ENCODE measurements at regions of chr22 and their contacts with region 1.

Region 1: GRCh38 chr22:45096256-45096907 is 67.3 kb upstream of the NUP50 start:
- DNase-seq: peak; percentile 87
- H3K4me3 ChIP-seq: no peak overlapping the region
- H3K27ac ChIP-seq: no peak overlapping the region
- H3K4me1 ChIP-seq: no peaks in the 10 kb centered on the region; a peak in 1 of 4 replicates
- H3K27me3 ChIP-seq: no peaks in the 10 kb centered on the region
- CTCF ChIP-seq: peak; percentile 83
- EP300 ChIP-seq: no peak
- RAD21 ChIP-seq: peak; percentile 85

Region 2: DNA sequence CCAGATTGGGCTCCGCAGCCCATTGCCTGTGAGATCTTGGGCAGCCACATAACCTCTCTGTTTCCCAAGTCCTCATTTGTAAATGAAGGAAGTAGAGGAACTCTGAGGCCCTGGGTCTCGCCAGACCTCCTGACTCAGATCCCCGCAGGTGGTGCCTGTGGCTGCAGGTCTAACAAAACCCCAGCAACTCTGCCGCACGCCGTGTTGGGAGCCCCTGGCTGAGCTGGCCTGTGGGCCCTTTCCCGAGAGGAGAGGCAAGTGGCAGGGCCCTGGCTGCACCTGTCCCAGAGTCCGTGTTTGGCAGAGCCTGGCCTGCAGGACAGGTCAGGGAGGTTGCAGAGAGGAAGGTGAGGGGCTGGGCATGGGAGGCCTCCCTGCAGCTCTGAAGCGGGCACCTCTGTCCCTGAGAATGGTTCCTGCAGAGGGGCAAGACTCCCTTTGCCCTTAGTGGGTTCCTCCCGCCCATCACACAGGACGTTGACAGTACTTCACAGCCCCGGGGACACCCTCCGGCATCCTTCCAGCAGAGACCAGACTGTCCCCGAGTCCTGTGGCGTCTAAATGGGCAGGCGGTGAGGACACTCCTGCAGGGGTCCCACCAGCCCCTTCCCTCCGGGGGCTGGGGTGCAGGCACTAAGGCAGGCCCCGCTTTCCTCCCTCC is 276.3 kb before region 1 on chr22:
- CTCF ChIA-PET with region 1: interaction called, 33 read pairs
- POLR2A ChIA-PET with region 1: no interaction called
- DNase-seq: no peak
- H3K4me3 ChIP-seq: peak overlapping the region in 1 of 2 experiments; percentile 47; a peak in 1 of 4 replicates
- H3K27ac ChIP-seq: no peak overlapping the region
- H3K4me1 ChIP-seq: no peaks in the 10 kb centered on the region; a peak in 1 of 4 replicates
- H3K27me3 ChIP-seq: no peaks in the 10 kb centered on the region
- CTCF ChIP-seq: no peak
- EP300 ChIP-seq: no peak
- RAD21 ChIP-seq: no peak

Region 3: DNA sequence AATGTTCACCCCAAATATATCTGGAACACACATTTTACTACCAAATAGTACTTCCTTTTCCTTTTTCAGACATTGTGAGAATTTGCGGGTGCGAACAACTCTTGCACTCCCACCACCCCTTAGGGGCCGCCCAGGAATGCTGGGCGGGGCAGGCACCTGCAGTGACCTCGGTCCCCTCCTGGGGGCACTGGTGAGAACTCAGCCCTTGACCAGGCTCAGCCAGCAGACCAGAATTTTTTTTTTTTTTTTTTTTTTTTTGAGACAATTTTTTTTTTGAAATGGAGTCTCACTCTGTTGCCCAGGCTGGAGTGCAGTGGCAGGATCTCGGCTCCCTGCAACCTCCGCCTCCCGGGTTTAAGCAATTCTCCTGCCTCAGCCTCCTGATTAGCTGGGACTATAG is 268.2 kb before region 1 on chr22:
- CTCF ChIA-PET with region 1: interaction called, 12 read pairs
- POLR2A ChIA-PET with region 1: no interaction called
- DNase-seq: peak; percentile 87
- H3K4me3 ChIP-seq: no peak overlapping the region
- H3K27ac ChIP-seq: no peak overlapping the region
- H3K4me1 ChIP-seq: peaks cover 0 to 7% of the 10 kb centered on the region in 2 experiments; a peak in 1 of 4 replicates
- H3K27me3 ChIP-seq: no peaks in the 10 kb centered on the region
- CTCF ChIP-seq: peak; percentile 53
- EP300 ChIP-seq: no peak
- RAD21 ChIP-seq: peak; percentile 54

Region 4: GRCh38 chr22:44975427-44976262 is 120.7 kb before region 1 on chr22:
- CTCF ChIA-PET with region 1: interaction called, 13 read pairs
- POLR2A ChIA-PET with region 1: no interaction called
- DNase-seq: peak; percentile 81
- H3K4me3 ChIP-seq: no peak overlapping the region; a peak in 1 of 4 replicates
- H3K27ac ChIP-seq: no peak overlapping the region
- H3K4me1 ChIP-seq: peaks cover 0 to 3% of the 10 kb centered on the region in 2 experiments; a peak in 1 of 4 replicates
- H3K27me3 ChIP-seq: no peaks in the 10 kb centered on the region
- CTCF ChIP-seq: peak; percentile 84
- EP300 ChIP-seq: no peak
- RAD21 ChIP-seq: peak; percentile 74

Region 5: GRCh38 chr22:45082795-45083194 is 13.6 kb before region 1 on chr22:
- CTCF ChIA-PET with region 1: interaction called, 15 read pairs
- POLR2A ChIA-PET with region 1: no interaction called
- DNase-seq: peak; percentile 75
- H3K4me3 ChIP-seq: no peak overlapping the region
- H3K27ac ChIP-seq: no peak overlapping the region
- H3K4me1 ChIP-seq: 0 out of 4 replicates have a peak, but pooled peaks cover 0 to 8% of the 10 kb centered on the region in 2 experiments
- H3K27me3 ChIP-seq: no peaks in the 10 kb centered on the region
- CTCF ChIP-seq: peak; percentile 13; the same call in 1 of the 2 replicates
- EP300 ChIP-seq: no peak
- RAD21 ChIP-seq: peak; percentile 73

Region 6: DNA sequence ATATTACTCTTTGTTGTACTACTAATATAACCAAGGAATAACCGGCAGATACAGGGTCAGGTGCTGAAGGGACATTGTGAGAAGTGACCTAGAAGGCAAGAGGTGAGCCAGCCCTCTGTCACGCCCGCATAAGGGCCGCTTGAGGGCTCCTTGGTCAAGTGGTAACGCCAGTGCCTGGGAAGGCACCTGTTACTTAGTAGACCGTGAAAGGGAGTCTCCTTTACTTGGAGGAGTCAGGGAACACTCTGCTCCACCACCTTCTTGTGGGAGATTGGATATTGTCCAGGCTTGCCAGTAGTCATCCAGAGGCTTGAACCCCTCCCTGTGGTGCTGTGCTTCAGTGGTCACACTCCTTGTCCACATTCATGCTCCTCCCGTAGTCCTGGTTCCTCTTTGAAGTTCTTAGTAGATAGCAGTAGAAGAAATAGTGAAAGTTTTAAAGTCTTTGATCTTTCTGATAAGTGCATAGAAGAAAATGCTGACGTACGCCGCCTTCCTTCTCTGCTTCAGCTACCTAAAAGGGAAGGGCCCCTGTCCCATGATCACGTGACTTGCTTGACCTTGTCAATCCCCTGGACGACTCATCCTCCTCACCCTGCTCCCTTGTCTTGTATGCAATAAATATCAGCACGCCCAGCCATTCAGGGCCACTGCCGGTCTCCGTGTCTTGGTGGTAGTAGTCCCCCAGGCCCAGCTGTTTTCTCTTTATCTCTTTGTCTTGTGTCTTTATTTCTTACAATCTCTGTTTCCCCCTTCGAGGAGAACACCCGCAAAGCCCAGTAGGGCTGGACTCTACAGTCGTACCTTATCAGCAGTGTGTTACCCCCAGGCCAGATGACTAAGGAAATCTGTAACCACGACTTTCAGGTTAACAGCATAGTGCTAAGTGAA is 73.4 kb after region 1 on chr22:
- CTCF ChIA-PET with region 1: no interaction called
- POLR2A ChIA-PET with region 1: no interaction called
- DNase-seq: no peak
- H3K4me3 ChIP-seq: no peak overlapping the region
- H3K27ac ChIP-seq: no peak overlapping the region; a peak in 1 of 4 replicates
- H3K4me1 ChIP-seq: peaks cover 6 to 7% of the 10 kb centered on the region in 2 experiments; a peak in 3 of 4 replicates
- H3K27me3 ChIP-seq: no peaks in the 10 kb centered on the region
- CTCF ChIP-seq: no peak
- EP300 ChIP-seq: no peak
- RAD21 ChIP-seq: no peak

Region 7: DNA sequence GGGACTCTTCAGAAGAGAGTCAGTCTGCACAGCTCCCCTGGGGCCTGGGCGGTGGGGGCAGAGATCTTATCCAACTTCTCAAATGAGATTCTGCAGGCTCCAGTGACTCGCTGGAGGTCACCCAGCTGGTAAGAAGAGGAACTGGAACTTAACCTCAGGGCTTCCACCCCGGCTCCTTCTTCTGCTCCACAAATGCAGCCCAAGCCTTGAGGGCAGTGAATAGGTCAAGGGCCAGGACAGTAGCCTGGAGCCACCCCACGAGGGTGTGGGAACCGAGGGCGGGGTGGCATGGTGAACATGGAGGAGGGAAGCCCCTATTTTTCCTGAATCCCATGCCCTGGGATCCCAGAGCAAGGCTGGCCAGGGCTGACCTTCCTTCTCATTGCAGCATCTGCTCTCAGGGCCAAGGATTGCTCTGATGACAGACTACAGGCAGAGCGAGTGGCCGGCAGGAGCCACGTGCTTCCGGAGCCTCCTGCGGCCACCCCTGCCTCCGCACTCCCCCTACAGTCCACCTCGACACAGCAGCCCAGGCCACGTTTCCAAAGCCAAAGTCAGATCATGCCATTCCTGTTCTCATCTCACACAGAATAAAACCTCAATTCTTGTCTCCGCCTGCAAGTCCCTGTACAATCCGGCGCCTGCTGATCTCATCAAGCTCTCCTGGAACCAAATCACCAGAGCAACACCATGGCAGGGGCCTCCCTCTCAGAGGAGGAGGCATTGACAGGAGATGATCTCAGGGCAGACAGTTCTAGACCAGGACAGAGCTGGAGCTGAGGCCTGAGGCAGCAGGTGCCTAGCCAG is 167.3 kb after region 1 on chr22:
- CTCF ChIA-PET with region 1: interaction called, 13 read pairs
- POLR2A ChIA-PET with region 1: no interaction called
- DNase-seq: peak; percentile 94
- H3K4me3 ChIP-seq: no peak overlapping the region
- H3K27ac ChIP-seq: peak overlapping the region in 1 of 2 experiments; percentile 31; a peak in 3 of 4 replicates
- H3K4me1 ChIP-seq: peaks cover 0 to 12% of the 10 kb centered on the region in 2 experiments; a peak in 1 of 4 replicates
- H3K27me3 ChIP-seq: no peaks in the 10 kb centered on the region
- CTCF ChIP-seq: peak; percentile 72
- EP300 ChIP-seq: peak in 1 of 2 experiments; percentile 14; a peak in 1 of 4 replicates
- RAD21 ChIP-seq: peak; percentile 88